Right ventricle myocardium inferior (tissue), 1 donor: ENCODE measurements at regions of chr9 and their contacts with region 1.

Region 1: GRCh38 chr9:96232539-96233241 is 69.3 kb downstream of the HSD17B3 start:
- DNase-seq: peak; percentile 77
- ATAC-seq: peak; percentile 94

Region 2: DNA sequence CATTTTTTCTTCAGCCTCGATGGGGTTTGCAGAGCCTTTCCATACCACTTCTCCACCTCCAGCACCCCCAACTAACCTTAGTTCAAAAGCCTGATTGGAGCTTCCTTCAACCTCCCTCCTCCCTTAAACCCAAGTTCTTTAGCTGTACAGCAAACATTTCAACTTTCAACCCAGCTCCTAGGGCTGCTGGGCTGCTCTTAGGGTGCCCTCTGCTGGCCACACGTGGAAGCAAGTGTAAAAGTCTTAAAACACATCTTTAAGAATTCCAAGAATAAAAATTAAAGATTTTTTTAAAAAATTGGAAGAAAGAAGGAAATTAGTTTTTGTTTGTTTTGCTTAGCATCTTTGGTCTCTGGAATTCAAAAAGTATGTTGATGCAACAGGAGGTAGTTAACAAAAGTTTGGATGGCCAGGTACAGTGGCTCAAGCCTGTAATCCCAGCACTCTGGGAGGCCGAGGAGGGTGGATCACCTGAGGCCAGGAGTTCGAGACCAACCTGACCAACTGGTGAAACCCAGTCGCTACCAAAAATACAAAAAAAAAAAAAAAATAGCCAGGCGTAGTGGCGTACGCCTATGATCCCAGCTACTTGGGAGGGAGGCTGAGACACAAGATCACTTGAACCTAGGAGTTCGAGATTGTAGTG is 84.8 kb after region 1 on chr9:
- intact Hi-C with region 1: loop called (anchors 1 kb)
- DNase-seq: peak; percentile 72
- ATAC-seq: peak; percentile 67